ENCODE measurements at regions of chr17 and their contacts with region 1.

Region 1: DNA sequence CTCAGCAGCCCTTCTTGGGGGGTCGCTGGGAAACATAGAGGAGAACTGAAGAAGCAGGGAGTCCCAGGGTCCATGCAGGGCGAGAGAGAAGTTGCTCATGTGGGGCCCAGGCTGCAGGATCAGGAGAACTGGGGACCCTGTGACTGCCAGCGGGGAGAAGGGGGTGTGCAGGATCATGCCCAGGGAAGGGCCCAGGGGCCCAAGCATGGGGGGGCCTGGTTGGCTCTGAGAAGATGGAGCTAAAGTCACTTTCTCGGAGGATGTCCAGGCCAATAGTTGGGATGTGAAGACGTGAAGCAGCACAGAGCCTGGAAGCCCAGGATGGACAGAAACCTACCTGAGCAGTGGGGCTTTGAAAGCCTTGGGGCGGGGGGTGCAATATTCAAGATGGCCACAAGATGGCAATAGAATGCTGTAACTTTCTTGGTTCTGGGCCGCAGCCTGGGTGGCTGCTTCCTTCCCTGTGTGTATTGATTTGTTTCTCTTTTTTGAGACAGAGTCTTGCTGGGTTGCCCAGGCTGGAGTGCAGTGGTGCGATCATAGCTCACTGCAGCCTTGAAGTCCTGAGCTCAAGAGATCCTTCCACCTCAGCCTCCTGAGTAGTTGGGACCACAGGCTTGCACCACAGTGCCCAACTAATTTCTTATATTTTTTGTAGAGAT is 3.4 kb downstream of the STH start:
- DNase-seq: peak; percentile 84
- ATAC-seq: peak; percentile 93
- H3K4me3 Mint-ChIP-seq: no peak overlapping the region
- H3K27ac Mint-ChIP-seq: no peak overlapping the region
- H3K4me1 Mint-ChIP-seq: no peaks in the 10 kb centered on the region
- H3K27me3 Mint-ChIP-seq: peaks cover 5% of the 10 kb centered on the region

Region 2: DNA sequence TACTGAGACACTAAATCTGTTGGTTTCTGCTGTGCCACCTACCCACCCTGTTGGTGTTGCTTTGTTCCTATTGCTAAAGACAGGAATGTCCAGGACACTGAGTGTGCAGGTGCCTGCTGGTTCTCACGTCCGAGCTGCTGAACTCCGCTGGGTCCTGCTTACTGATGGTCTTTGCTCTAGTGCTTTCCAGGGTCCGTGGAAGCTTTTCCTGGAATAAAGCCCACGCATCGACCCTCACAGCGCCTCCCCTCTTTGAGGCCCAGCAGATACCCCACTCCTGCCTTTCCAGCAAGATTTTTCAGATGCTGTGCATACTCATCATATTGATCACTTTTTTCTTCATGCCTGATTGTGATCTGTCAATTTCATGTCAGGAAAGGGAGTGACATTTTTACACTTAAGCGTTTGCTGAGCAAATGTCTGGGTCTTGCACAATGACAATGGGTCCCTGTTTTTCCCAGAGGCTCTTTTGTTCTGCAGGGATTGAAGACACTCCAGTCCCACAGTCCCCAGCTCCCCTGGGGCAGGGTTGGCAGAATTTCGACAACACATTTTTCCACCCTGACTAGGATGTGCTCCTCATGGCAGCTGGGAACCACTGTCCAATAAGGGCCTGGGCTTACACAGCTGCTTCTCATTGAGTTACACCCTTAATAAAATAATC is 11.2 kb after region 1 on chr17:
- CTCF ChIA-PET with region 1: interaction called, 10 read pairs
- POLR2A ChIA-PET with region 1: no interaction called
- DNase-seq: no peak
- ATAC-seq: no peak
- H3K4me3 Mint-ChIP-seq: no peak overlapping the region
- H3K27ac Mint-ChIP-seq: no peak overlapping the region
- H3K4me1 Mint-ChIP-seq: no peaks in the 10 kb centered on the region
- H3K27me3 Mint-ChIP-seq: no peaks in the 10 kb centered on the region

Region 3: GRCh38 chr17:46020023-46020761 is 17.8 kb after region 1 on chr17:
- CTCF ChIA-PET with region 1: interaction called, 15 read pairs
- POLR2A ChIA-PET with region 1: no interaction called
- DNase-seq: peak; percentile 70
- ATAC-seq: peak; percentile 94
- H3K4me3 Mint-ChIP-seq: no peak overlapping the region
- H3K27ac Mint-ChIP-seq: peak overlapping the region; percentile 87
- H3K4me1 Mint-ChIP-seq: peaks cover 12% of the 10 kb centered on the region
- H3K27me3 Mint-ChIP-seq: no peaks in the 10 kb centered on the region

Measured in activated CD8-positive, alpha-beta T cell treated with anti-CD3 and anti-CD28 coated beads, Interleukin-2, amount 10 ng/mL, durations not matched to agents 7 days and 5 days (primary cell).